Breast epithelium (tissue), 4 donors: ENCODE measurements at regions of chr11 and their contacts with region 1.

Region 1: DNA sequence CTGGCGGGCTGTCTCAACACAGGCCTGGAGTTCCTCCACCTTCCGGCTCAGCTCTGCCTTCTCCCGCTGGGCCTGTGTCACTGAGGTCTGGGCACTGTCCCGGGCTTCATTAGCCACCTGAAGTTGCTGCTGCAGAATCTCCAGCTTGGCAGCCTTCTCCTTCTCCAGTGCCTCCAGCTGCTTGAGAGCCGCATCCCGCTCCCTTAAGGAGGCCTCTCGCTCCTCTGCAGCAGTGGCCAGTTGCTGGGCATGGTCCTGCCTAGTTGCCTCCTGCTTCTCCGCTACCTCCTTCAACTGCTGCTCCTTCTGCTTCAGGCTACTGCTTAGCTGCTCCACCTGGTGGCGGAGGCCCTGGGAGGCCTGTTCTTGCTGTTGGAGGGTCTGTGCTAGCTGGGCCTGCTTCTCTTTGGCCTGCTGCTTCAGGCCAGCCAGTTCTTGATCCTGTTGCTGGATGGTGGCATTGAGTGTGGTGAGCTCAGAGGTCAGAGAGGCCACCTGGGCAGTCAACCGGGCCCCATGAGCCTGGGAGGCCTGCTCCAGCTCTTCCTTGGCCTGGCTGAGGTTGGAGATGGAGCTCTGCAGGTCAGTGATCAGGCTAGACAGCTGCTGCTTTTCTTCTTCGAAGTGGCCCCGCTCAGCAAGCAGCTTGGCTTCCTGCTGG is 16.9 kb downstream of the IL18BP start:
- DNase-seq: peak in 1 of 2 donors; percentile 35
- H3K4me3 ChIP-seq: no peak overlapping the region
- H3K27ac ChIP-seq: peak overlapping the region in 1 of 2 donors; percentile 70
- H3K4me1 ChIP-seq: peaks cover 12% of the 10 kb centered on the region in 2 donors
- H3K27me3 ChIP-seq: no peaks in the 10 kb centered on the region
- CTCF ChIP-seq: no peak
- POLR2A ChIP-seq: no peak

Region 2: GRCh38 chr11:72091005-72091691 is 75.5 kb after region 1 on chr11:
- intact Hi-C with region 1: loop called (anchors 10 kb)
- DNase-seq: peak; percentile 66 to 71
- H3K4me3 ChIP-seq: no peak overlapping the region
- H3K27ac ChIP-seq: peak overlapping the region; percentile 29 to 70
- H3K4me1 ChIP-seq: peaks cover 0 to 7% of the 10 kb centered on the region in 2 donors
- H3K27me3 ChIP-seq: no peaks in the 10 kb centered on the region
- CTCF ChIP-seq: peak; percentile 59 to 97 (median 90)
- POLR2A ChIP-seq: no peak